WTC11 (cell line): ENCODE measurements at regions of chr2 and their contacts with region 1.

Region 1: GRCh38 chr2:120396013-120396885 is 50.3 kb downstream of the INHBB start:
- DNase-seq: no peak
- ATAC-seq: peak; percentile 65
- H3K4me3 Mint-ChIP-seq: no peak overlapping the region
- H3K27ac Mint-ChIP-seq: no peak overlapping the region
- H3K4me1 Mint-ChIP-seq: peaks cover 7% of the 10 kb centered on the region
- H3K27me3 Mint-ChIP-seq: peaks cover 7% of the 10 kb centered on the region
- CTCF ChIP-seq: no peak

Region 2: DNA sequence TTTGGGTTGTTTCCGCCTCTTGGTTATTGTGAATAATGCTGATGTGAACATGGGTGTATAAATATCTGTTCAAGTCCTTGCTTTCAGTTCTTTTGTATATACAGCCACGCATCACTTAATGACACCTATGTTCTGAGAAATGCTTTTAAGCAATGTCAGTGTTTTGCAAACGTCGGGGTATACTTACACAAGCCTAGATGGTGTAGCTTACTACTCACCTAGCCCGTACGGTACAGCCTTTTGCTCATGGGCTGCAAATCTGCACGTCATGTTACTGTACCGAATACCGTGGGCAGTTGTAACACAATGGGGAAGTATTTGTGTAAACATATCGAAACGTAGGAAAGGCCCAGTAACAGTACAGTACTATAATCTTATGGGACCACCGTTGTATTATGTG is 131.2 kb before region 1 on chr2:
- CTCF ChIA-PET with region 1: no interaction called
- POLR2A ChIA-PET with region 1: no interaction called
- DNase-seq: no peak
- ATAC-seq: no peak
- H3K4me3 Mint-ChIP-seq: no peak overlapping the region
- H3K27ac Mint-ChIP-seq: no peak overlapping the region
- H3K4me1 Mint-ChIP-seq: peaks cover 6% of the 10 kb centered on the region
- H3K27me3 Mint-ChIP-seq: no peaks in the 10 kb centered on the region
- CTCF ChIP-seq: no peak

Region 3: DNA sequence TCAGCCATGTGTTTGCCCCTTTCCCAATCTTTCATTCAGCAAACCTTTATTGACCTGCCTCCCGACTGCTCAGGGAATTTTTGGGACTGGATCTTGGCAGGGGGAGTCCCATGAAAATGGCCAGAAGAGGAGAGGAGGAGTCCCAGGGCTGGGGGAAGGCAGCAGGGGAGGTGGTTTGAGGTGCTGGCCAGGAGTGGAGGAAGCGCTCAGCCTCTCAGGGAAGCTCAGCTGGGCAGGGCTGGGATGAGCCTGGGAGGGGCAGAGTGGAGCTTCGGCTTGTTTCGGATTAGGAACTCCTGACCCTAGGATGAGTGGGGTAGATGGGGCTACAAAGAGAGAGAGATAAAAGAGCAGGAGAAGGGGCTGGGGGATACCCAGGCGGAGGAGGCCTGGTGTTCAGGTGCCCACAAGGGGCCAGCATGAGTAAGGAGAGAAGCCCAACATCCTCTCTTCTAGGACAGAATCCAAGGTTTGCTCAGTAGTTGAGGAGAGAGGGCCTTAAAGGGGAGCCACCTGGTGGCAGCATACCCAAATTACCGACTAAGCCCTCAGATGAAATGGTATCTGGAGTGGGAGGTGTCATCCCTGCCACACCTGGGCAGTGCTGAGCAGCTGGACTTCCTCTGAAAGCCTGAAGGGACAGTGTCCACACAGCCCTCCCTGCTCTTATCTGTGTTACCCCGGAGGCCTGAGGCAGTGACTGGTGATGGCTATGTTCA is 40.8 kb after region 1 on chr2:
- CTCF ChIA-PET with region 1: interaction called, 14 read pairs
- POLR2A ChIA-PET with region 1: no interaction called
- DNase-seq: peak; percentile 84
- ATAC-seq: peak; percentile 78
- H3K4me3 Mint-ChIP-seq: no peak overlapping the region
- H3K27ac Mint-ChIP-seq: no peak overlapping the region
- H3K4me1 Mint-ChIP-seq: peaks cover 30% of the 10 kb centered on the region
- H3K27me3 Mint-ChIP-seq: peaks cover 77% of the 10 kb centered on the region
- CTCF ChIP-seq: peak; percentile 33; the same call in 1 of the 2 replicates